ENCODE measurements at regions of chr2 and their contacts with region 1.

Region 1: DNA sequence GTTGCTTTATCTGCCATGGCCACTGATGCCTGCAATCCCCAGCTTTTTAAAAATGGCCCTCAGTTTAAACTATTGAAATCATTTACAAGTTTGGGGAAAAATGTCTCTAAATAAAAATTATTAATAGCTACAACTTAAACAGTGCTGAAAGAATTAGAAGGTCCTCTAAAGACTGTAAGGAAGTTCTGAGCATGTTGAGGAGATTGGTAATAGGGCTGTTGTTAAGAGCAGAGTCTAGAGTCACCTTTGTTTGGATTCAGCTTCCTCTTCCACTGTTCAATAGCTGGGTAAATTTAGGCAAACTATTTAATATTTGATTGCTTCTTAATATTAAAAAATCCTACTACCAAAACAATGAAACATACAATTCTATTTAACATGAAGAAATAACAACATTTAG is 1127.1 kb upstream of the DDX18 start:
- DNase-seq: no peak
- H3K4me3 ChIP-seq: no peak overlapping the region
- H3K27ac ChIP-seq: no peak overlapping the region
- H3K4me1 ChIP-seq: no peaks in the 10 kb centered on the region
- H3K27me3 ChIP-seq: no peaks in the 10 kb centered on the region
- CTCF ChIP-seq: no peak
- POLR2A ChIP-seq: no peak

Region 2: GRCh38 chr2:115248066-115248465 is 1439.3 kb before region 1 on chr2:
- intact Hi-C with region 1: loop called (anchors 5 kb)
- DNase-seq: no peak
- H3K4me3 ChIP-seq: no peak overlapping the region
- H3K27ac ChIP-seq: no peak overlapping the region
- H3K4me1 ChIP-seq: no peaks in the 10 kb centered on the region
- H3K27me3 ChIP-seq: no peaks in the 10 kb centered on the region
- CTCF ChIP-seq: no peak
- POLR2A ChIP-seq: no peak

Region 3: DNA sequence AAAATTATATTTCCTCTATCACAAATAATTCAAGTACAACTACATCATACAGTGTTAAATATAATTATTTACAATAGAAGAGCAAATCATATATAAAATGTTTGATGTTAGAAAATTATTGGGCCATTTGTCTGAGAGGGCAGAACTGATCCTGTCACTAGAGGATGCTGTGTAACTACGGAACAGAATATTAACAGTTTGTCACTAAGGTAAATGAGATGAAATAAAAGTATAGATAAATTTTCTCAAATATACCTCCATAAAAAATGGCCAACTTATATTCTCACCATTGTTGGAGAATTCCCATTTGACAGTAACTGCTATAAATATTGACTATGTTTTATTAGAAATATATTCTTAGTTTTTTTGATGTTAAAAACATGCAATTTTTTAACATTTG is 59.7 kb after region 1 on chr2:
- intact Hi-C with region 1: no loop called
- DNase-seq: no peak
- H3K4me3 ChIP-seq: no peak overlapping the region
- H3K27ac ChIP-seq: no peak overlapping the region
- H3K4me1 ChIP-seq: no peaks in the 10 kb centered on the region
- H3K27me3 ChIP-seq: no peaks in the 10 kb centered on the region
- CTCF ChIP-seq: no peak
- POLR2A ChIP-seq: no peak

Region 4: DNA sequence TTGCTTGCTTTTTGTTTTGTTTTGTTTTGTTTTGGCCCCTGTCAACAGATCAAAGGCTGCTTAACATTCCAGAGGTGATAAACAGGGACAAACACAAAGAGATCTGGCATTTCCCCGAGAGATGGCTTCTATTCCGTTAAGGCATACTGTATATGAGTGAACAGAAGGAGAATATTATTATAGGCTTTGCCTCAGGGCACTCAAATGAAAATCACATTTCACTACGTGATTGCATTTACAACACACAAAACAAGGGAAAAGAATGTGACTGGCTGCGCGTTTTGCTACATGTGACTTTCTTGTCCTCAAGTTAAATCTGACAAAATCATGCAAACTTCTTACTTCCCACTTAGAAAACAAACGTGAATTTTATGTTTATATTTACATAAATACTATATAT is 89.2 kb after region 1 on chr2:
- intact Hi-C with region 1: no loop called
- DNase-seq: no peak
- H3K4me3 ChIP-seq: no peak overlapping the region
- H3K27ac ChIP-seq: no peak overlapping the region
- H3K4me1 ChIP-seq: no peaks in the 10 kb centered on the region
- H3K27me3 ChIP-seq: no peaks in the 10 kb centered on the region
- CTCF ChIP-seq: no peak
- POLR2A ChIP-seq: no peak